ENCODE measurements at regions of chr14 and their contacts with region 1.

Region 1: DNA sequence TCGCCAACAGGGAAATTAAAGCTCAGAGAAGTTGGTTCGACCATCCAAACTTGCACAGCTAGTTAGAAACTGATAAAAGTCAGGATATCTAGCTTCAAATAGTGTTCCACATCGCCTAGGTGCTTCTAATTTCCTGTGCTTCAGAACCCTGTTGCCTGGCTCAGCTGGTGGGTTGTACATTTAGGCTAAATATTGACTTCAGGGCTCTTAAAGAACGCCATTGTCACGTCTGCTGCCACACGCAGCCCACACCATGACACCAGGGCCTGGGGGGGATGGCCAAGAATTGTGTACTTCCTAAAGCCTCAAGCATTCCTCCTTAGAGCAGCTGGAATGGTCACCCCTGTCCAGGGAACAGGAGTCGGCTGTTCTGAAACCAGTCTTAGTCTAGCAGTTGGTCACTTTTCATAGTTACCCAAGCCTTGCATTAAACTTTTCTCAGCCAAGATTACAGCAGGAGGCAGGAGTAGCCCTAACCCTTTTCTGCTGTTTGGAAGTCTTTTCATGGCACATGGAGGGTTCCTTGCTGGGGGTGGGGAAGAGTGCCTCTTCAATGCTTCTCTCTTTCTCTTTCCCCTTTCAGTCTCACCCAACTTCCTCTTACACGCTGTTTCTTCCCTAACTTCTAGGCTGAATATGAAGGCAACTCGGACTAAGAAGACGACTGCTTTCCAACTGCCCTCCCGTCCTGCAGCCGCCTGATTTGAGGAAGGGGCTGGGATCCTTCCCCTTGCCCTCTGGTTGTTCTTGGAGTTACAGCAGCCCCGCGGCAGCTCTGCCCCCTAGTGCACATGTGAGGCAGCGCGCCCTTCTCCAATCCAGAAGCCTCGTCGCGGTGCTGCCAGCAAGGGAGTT is 17.1 kb downstream of the FOS start:
- DNase-seq: peak; percentile 80
- H3K4me3 ChIP-seq: peak overlapping the region; percentile 71
- H3K27ac ChIP-seq: peak overlapping the region; percentile 91
- H3K4me1 ChIP-seq: peaks cover 28% of the 10 kb centered on the region
- H3K27me3 ChIP-seq: no peaks in the 10 kb centered on the region
- CTCF ChIP-seq: peak; percentile 99

Region 2: GRCh38 chr14:75141967-75142366 is 153.8 kb before region 1 on chr14:
- intact Hi-C with region 1: loop called (anchors 5 kb)
- DNase-seq: no peak
- H3K4me3 ChIP-seq: no peak overlapping the region
- H3K27ac ChIP-seq: peak overlapping the region; percentile 39
- H3K4me1 ChIP-seq: peaks cover 68% of the 10 kb centered on the region
- H3K27me3 ChIP-seq: no peaks in the 10 kb centered on the region
- CTCF ChIP-seq: peak; percentile 56

Region 3: DNA sequence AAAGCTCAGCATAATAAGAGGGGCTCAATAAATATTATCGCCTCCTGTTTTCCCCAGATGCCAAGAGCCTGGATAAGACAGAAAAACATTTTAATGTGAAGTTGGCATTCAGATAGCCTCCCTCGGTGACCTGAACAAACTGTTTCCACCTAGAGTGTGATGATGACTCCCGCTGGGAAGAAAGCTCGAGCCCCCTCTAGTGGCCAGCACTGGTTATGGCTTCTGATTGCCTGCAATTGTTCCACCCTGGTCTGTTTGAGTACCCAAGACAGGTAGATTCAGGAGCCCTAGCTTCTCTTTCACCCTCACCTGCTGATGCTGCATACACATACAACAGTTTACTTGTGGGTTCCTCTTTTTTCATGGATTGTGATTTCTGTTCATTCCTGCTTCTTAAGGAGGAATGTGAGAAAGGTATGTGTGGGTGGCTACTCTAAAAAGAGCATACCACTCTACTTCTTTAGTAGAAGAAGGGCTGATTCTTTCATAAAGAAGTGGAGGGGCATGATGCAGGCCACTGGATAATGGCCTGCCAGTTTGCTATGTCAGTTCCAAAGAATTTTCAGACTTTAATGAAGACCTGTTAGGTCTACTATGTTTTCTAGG is 358.5 kb after region 1 on chr14:
- intact Hi-C with region 1: no loop called
- DNase-seq: peak; percentile 78
- H3K4me3 ChIP-seq: no peak overlapping the region
- H3K27ac ChIP-seq: no peak overlapping the region
- H3K4me1 ChIP-seq: peaks cover 5% of the 10 kb centered on the region
- H3K27me3 ChIP-seq: no peaks in the 10 kb centered on the region
- CTCF ChIP-seq: peak; percentile 99